ENCODE measurements at regions of chr19 and their contacts with region 1.

Region 1: DNA sequence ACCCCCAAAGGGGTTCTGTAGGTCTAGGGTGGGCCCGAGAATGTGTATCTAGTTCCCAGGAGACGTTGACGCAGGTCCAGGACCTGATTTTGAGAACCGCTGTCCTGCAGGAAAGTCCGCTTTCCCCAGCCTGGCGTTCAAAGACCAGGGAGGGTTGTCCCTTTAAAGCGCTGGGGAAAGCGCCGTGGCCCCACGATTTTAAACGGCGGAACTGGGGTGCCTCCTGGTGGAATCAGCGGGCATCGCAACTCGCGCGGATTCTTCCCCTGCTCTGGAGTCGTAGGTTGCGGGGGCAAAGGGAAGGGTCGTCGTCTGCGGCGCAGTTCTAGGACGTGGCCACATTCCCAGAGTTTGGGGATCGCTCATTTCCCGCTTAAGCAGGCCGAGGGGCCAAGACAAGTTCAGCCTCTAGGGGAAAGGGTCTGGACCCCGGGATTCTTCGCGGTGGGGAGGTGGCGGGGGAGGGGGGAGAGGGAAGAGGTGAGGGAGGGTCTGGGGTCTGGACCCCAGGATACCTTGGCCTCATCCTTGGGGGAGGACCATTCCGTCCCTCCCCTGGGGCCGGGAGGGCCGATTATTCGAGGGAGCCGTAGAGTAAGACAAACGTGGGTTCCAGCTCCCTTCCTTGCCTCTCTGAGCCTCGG is 7.7 kb downstream of the PNMA8B start:
- DNase-seq: peak; percentile 88
- H3K4me3 ChIP-seq: peak overlapping the region in 3 of 8 donors; percentile 12 to 50 (median 31)
- H3K27ac ChIP-seq: no peak overlapping the region
- H3K4me1 ChIP-seq: peaks cover 14 to 58% (median 41%) of the 10 kb centered on the region in 6 donors
- H3K27me3 ChIP-seq: peaks cover 0 to 90% (median 39%) of the 10 kb centered on the region in 7 donors
- CTCF ChIP-seq: peak; percentile 78 to 97 (median 91)
- POLR2A ChIP-seq: no peak

Region 2: DNA sequence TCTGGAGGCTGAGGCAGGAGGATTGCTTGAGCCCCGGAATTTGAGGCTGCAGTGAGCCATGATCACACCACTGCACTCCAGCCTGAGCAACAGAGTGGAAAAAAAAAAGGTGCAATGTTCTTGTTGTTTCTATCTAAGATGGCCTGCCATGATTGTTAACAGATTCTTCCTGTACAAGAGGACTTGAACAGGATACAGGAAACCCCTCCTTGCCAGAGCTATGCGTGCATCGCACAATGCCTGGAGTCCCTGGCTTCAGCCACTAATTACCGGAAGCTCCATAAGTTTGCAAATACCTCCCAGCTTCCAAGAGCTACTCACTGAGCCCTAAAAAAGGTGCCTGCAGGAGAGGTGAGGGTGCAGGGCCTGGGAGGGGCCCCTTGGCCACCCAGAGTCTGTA is 204.2 kb before region 1 on chr19:
- intact Hi-C with region 1: loop called (anchors 5 kb)
- DNase-seq: no peak
- H3K4me3 ChIP-seq: no peak overlapping the region
- H3K27ac ChIP-seq: peak overlapping the region in 7 of 8 donors; percentile 8 to 78 (median 69)
- H3K4me1 ChIP-seq: peaks cover 0 to 22% (median 0%) of the 10 kb centered on the region in 6 donors
- H3K27me3 ChIP-seq: peaks cover 0 to 4% (median 0%) of the 10 kb centered on the region in 7 donors
- CTCF ChIP-seq: no peak
- POLR2A ChIP-seq: no peak

Region 3: DNA sequence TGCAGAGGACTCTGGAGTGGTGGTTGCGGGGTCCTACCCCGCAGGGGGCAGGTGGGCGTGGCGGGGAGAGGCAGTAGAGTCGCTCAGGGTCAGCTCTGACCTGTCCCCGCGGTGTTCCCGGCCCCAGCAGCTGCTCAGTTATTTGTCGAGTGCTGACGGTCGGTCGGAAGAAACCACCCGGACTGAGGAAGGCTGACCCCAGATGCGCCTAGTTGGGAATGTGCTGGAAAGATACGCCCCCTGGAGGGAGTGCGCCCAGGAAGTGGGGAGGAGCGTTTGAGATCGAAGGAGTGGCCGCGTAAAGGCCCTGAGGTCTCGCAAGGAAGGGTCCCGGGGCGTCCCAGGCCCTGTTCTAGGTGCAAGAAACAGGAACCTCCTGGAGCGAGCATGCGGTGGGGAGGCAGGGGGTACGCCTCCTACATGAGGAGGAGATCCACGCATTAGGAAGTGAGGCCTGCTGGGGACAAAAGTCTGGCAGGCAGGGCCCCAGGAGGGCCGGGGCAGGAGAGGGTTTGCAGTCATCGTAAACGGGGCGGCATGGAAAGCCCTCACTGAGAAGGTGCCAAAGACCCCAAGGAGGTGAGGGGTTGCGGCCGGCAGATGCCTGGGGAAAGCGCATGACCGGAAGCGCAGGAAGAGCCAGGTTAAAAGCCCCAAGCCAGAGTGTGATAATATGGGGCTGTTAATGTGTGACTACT is 83.7 kb before region 1 on chr19:
- intact Hi-C with region 1: loop called (anchors 2 kb)
- DNase-seq: peak; percentile 61
- H3K4me3 ChIP-seq: peak overlapping the region; percentile 12 to 50 (median 24)
- H3K27ac ChIP-seq: peak overlapping the region in 3 of 8 donors; percentile 32 to 44 (median 42)
- H3K4me1 ChIP-seq: peaks cover 6 to 37% (median 20%) of the 10 kb centered on the region in 6 donors
- H3K27me3 ChIP-seq: peaks cover 0 to 98% (median 46%) of the 10 kb centered on the region in 7 donors
- CTCF ChIP-seq: peak in 3 of 11 experiments; percentile 11 to 30 (median 21)
- POLR2A ChIP-seq: no peak

Region 4: GRCh38 chr19:46579361-46579879 is 91.5 kb after region 1 on chr19:
- intact Hi-C with region 1: no loop called
- DNase-seq: no peak
- H3K4me3 ChIP-seq: no peak overlapping the region
- H3K27ac ChIP-seq: no peak overlapping the region
- H3K4me1 ChIP-seq: peaks cover 0 to 9% (median 2%) of the 10 kb centered on the region in 6 donors
- H3K27me3 ChIP-seq: no peaks in the 10 kb centered on the region
- CTCF ChIP-seq: peak in 4 of 11 experiments; percentile 7 to 42 (median 24)
- POLR2A ChIP-seq: no peak

Region 5: GRCh38 chr19:46614114-46614722 is 126.3 kb after region 1 on chr19:
- intact Hi-C with region 1: no loop called
- DNase-seq: peak; percentile 93
- H3K4me3 ChIP-seq: no peak overlapping the region
- H3K27ac ChIP-seq: no peak overlapping the region
- H3K4me1 ChIP-seq: peaks cover 36 to 95% (median 59%) of the 10 kb centered on the region in 6 donors
- H3K27me3 ChIP-seq: no peaks in the 10 kb centered on the region
- CTCF ChIP-seq: peak; percentile 83 to 96 (median 92)
- POLR2A ChIP-seq: no peak

Measured in spleen (tissue), 13 donors.